ENCODE measurements at regions of chr1 and their contacts with region 1.

Region 1: DNA sequence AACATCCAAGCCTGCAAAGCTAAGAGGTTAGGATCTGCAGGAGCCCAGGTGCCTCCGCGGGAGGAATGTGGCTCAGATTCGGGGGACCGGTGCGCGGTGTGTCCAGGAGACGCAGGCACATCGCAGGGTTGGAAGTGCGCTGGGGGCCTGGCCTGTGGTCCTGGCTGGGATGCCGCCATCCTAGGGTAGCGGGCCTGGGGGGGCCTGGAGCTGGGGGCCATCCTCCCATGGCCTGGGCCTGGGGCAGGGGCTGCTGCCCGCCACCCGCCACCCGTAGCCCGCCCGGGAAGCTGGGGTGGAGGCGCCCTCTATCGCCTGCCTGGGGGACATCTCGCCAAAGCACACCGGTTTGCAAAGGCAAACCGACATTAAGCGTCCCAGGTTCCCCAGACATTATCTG is 170.6 kb upstream of the ARHGEF16 start:
- DNase-seq: peak; percentile 53 to 62
- ATAC-seq: peak; percentile 60 to 89 (median 74)
- H3K4me3 ChIP-seq: peak overlapping the region in 5 of 10 donors; percentile 3 to 30 (median 20)
- H3K27ac ChIP-seq: peak overlapping the region in 8 of 10 donors; percentile 44 to 75 (median 55)
- H3K4me1 ChIP-seq: peaks cover 0 to 24% (median 13%) of the 10 kb centered on the region in 9 donors
- H3K27me3 ChIP-seq: peaks cover 0 to 35% (median 15%) of the 10 kb centered on the region in 7 donors
- CTCF ChIP-seq: peak; percentile 46 to 89 (median 74)

Region 2: GRCh38 chr1:3012456-3013291 is 271.2 kb before region 1 on chr1:
- intact Hi-C with region 1: loop called in 3 of 10 experiments (anchors 5 to 10 kb)
- DNase-seq: peak; percentile 41 to 73
- ATAC-seq: peak; percentile 58 to 85 (median 82)
- H3K4me3 ChIP-seq: no peak overlapping the region
- H3K27ac ChIP-seq: no peak overlapping the region
- H3K4me1 ChIP-seq: peaks cover 0 to 13% (median 2%) of the 10 kb centered on the region in 9 donors
- H3K27me3 ChIP-seq: peaks cover 3 to 72% (median 45%) of the 10 kb centered on the region in 7 donors
- CTCF ChIP-seq: peak; percentile 76 to 90 (median 81)

Region 3: DNA sequence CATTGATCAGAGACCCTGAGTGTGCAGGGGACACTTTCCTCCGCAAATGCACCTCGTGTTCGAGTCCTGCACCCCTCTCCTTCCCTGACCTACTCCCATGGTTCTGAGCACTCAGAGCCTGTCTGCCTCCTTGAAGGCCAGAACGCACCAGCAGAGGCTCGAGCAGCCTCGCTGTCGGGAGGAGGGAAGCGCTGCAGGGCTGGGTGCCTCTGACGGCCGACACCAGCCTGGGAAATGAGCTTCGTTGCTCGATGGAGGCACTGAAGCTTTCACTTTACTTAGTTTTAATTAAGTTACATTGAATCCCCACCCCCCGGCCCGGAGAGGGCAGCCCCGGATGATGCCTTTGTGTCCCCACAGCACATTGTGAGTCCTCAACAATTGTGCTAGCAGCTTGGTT is 14.3 kb after region 1 on chr1:
- intact Hi-C with region 1: no loop called
- DNase-seq: no peak
- ATAC-seq: no peak
- H3K4me3 ChIP-seq: no peak overlapping the region
- H3K27ac ChIP-seq: no peak overlapping the region
- H3K4me1 ChIP-seq: peaks cover 0 to under 1% (median 0%) of the 10 kb centered on the region in 9 donors
- H3K27me3 ChIP-seq: peaks cover 0 to 11% (median 0%) of the 10 kb centered on the region in 7 donors
- CTCF ChIP-seq: no peak

Measured in heart right ventricle (tissue), 16 donors.